Activated CD4-positive, alpha-beta memory T cell treated with anti-CD3 and anti-CD28 coated beads for 36 hours (primary cell): ENCODE measurements at regions of chr5 and their contacts with region 1.

Region 1: DNA sequence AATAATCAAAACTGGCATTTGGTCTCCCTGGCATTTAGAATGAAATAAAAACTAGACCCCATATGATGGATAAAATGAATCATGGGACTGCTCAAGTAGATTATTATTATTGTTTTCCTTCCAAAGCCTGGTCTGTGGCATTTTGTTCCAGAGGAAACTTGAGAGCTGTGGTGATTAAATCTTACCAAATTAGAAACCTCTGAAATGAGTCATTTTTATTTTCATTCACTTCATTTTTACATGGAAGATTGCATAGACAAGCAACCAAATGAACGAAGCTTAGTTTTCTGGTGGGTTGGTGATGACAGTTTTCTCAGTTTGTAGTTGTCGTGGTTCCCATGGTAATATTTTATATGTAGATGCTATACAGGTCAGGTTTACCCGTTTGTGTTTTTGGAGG is 23.4 kb downstream of the PAM start:
- DNase-seq: no peak
- H3K4me3 Mint-ChIP-seq: no peak overlapping the region
- H3K27ac Mint-ChIP-seq: peak overlapping the region; percentile 39
- H3K4me1 Mint-ChIP-seq: peaks cover 64% of the 10 kb centered on the region
- H3K27me3 Mint-ChIP-seq: no peaks in the 10 kb centered on the region

Region 2: GRCh38 chr5:102747386-102748166 is 30.9 kb before region 1 on chr5:
- CTCF ChIA-PET with region 1: interaction called, 10 read pairs
- POLR2A ChIA-PET with region 1: interaction called, 3 read pairs
- intact Hi-C with region 1: loop called (anchors 1 kb)
- DNase-seq: no peak
- H3K4me3 Mint-ChIP-seq: no peak overlapping the region
- H3K27ac Mint-ChIP-seq: no peak overlapping the region
- H3K4me1 Mint-ChIP-seq: peaks cover 13% of the 10 kb centered on the region
- H3K27me3 Mint-ChIP-seq: no peaks in the 10 kb centered on the region

Region 3: DNA sequence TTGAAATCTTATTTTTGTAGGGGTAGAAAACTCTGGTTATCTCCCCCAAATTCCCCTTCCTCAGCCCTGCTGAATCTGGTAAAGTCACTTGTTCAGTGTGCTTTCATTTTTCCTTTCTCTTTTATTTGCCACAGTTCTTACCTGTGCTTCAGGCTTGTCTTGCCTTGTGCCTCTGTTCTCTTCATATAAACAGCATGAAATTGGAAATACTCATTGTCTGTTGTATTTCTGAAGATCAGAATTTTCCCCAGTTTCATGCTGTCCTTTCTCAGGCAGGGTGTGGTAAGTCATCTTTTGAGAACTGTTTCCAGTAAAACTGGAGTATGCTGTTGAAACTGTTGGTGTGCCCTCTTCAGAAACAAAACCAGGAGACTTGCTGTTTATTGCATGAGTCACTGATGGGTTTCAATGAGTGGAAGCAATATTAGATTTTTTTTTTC is 16.4 kb before region 1 on chr5:
- CTCF ChIA-PET with region 1: interaction called, 24 read pairs
- POLR2A ChIA-PET with region 1: interaction called, 19 read pairs
- intact Hi-C with region 1: loop called (anchors 1 kb)
- DNase-seq: no peak
- H3K4me3 Mint-ChIP-seq: peak overlapping the region; percentile 51
- H3K27ac Mint-ChIP-seq: peak overlapping the region; percentile 75
- H3K4me1 Mint-ChIP-seq: peaks cover 76% of the 10 kb centered on the region
- H3K27me3 Mint-ChIP-seq: no peaks in the 10 kb centered on the region

Region 4: DNA sequence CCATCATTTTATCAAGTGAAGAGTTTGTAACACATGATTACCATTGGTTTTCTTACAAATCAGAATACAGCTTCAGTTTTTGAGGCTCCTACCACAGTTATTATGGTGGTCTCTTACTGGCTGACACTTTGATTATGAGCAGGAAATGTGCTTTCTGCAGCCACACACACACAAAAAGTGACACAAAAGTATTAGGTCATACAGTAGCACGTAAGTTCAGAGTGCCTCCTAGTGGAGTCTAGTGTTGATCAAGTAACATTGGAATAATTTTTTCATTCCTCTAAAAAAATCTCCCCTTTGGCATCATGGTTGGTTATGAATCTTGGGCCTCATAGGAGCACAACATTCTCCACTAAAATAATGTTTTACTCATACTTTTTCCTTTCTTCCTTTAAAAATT is 14.2 kb after region 1 on chr5:
- CTCF ChIA-PET with region 1: interaction called, 18 read pairs
- POLR2A ChIA-PET with region 1: no interaction called
- intact Hi-C with region 1: no loop called
- DNase-seq: no peak
- H3K4me3 Mint-ChIP-seq: no peak overlapping the region
- H3K27ac Mint-ChIP-seq: no peak overlapping the region
- H3K4me1 Mint-ChIP-seq: peaks cover 14% of the 10 kb centered on the region
- H3K27me3 Mint-ChIP-seq: no peaks in the 10 kb centered on the region

Region 5: GRCh38 chr5:102971697-102972293 is 193.3 kb after region 1 on chr5:
- CTCF ChIA-PET with region 1: interaction called, 9 read pairs
- POLR2A ChIA-PET with region 1: no interaction called
- intact Hi-C with region 1: loop called (anchors 5 kb)
- DNase-seq: no peak
- H3K4me3 Mint-ChIP-seq: no peak overlapping the region
- H3K27ac Mint-ChIP-seq: no peak overlapping the region
- H3K4me1 Mint-ChIP-seq: no peaks in the 10 kb centered on the region
- H3K27me3 Mint-ChIP-seq: no peaks in the 10 kb centered on the region

Region 6: GRCh38 chr5:103139264-103139865 is 360.9 kb after region 1 on chr5:
- CTCF ChIA-PET with region 1: interaction called, 23 read pairs
- POLR2A ChIA-PET with region 1: no interaction called
- intact Hi-C with region 1: loop called (anchors 1 kb)
- DNase-seq: peak; percentile 85
- H3K4me3 Mint-ChIP-seq: no peak overlapping the region
- H3K27ac Mint-ChIP-seq: no peak overlapping the region
- H3K4me1 Mint-ChIP-seq: peaks cover 5% of the 10 kb centered on the region
- H3K27me3 Mint-ChIP-seq: no peaks in the 10 kb centered on the region